ENCODE measurements at regions of chr9 and their contacts with region 1.

Region 1: GRCh38 chr9:21334701-21335632 is at the start of gene KLHL9:
- DNase-seq: peak; percentile 91
- ATAC-seq: peak; percentile 96
- H3K4me3 Mint-ChIP-seq: peak within 1 kb of the TSS; percentile 96
- H3K27ac Mint-ChIP-seq: peak within 1 kb of the TSS; percentile 90
- H3K4me1 Mint-ChIP-seq: peaks cover 47% of the 10 kb centered on the region
- H3K27me3 Mint-ChIP-seq: peaks cover 4% of the 10 kb centered on the region
- total RNA-seq, gene KLHL9: 15.4 to 21.2 TPM

Region 2: GRCh38 chr9:21317956-21318923 is 16.7 kb before region 1 on chr9:
- CTCF ChIA-PET with region 1: interaction called, 14 read pairs
- DNase-seq: no peak
- ATAC-seq: peak; percentile 69
- H3K4me3 Mint-ChIP-seq: no peak overlapping the region
- H3K27ac Mint-ChIP-seq: no peak overlapping the region
- H3K4me1 Mint-ChIP-seq: peaks cover 2% of the 10 kb centered on the region
- H3K27me3 Mint-ChIP-seq: peaks cover 15% of the 10 kb centered on the region

Measured in activated CD8-positive, alpha-beta memory T cell treated with anti-CD3 and anti-CD28 coated beads, Interleukin-2, amount 10 ng/mL, durations not matched to agents 7 days and 5 days (primary cell).